CD4-positive, alpha-beta T cell (primary cell): ENCODE measurements at regions of chr6 and their contacts with region 1.

Region 1: DNA sequence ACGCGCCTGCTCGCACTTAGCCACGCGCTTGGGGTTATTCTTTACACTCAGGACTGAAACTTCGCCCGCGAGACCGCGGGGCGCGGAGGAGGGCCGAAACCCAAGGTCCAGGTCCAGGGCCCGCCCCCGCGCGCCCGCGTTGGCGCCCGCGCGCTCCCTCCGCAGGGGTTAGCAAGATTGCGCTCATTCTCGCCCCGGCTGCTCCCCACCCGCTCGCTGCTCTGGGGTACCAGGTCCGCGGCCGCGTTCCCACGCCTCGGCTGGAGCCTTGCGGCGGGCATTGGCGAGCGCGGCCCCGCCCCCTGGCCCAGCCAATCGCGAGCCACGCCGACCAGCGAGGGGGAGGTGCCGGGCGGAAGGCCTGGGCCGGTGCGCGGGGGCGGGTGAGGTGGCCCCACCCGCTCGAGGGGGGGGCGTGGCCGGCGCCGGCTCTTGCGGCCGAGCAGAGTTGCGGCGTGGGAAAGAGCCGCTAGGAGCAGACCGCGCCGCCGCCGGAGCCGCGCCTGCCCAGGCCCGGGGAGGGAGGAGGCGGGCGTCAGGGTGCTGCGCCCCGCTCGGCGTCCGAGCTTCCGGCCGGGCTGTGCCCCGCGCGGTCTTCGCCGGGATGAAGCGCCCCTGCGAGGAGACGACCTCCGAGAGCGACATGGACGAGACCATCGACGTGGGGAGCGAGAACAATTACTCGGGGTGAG is at the start of gene HEY2:
- DNase-seq: peak; percentile 55 to 92 (median 76)
- ATAC-seq: peak; percentile 63
- H3K4me3 ChIP-seq: peak within 1 kb of the TSS; percentile 67
- H3K4me3 Mint-ChIP-seq: peak within 1 kb of the TSS; percentile 93
- H3K27ac ChIP-seq: no peak within 1 kb of the TSS
- H3K27ac Mint-ChIP-seq: peak within 1 kb of the TSS; percentile 43
- H3K4me1 ChIP-seq: peaks cover 38% of the 10 kb centered on the region
- H3K4me1 Mint-ChIP-seq: peaks cover 38% of the 10 kb centered on the region
- H3K27me3 ChIP-seq: peaks cover 44 to 58% of the 10 kb centered on the region in 2 experiments
- H3K27me3 Mint-ChIP-seq: peaks cover 85% of the 10 kb centered on the region
- CTCF ChIP-seq: peak; percentile 16
- total RNA-seq, gene HEY2: 0.08 to 0.30 TPM

Region 2: GRCh38 chr6:125191916-125192609 is 557.3 kb before region 1 on chr6:
- CTCF ChIA-PET with region 1: no interaction called
- POLR2A ChIA-PET with region 1: no interaction called
- intact Hi-C with region 1: loop called in 1 of 2 experiments (anchors 5 kb)
- DNase-seq: peak; percentile 9 to 74 (median 40)
- ATAC-seq: peak; percentile 82
- H3K4me3 ChIP-seq: no peak overlapping the region
- H3K4me3 Mint-ChIP-seq: no peak overlapping the region
- H3K27ac ChIP-seq: no peak overlapping the region
- H3K27ac Mint-ChIP-seq: no peak overlapping the region
- H3K4me1 ChIP-seq: peaks cover 5% of the 10 kb centered on the region
- H3K4me1 Mint-ChIP-seq: no peaks in the 10 kb centered on the region
- H3K27me3 ChIP-seq: no peaks in the 10 kb centered on the region
- H3K27me3 Mint-ChIP-seq: peaks cover 10% of the 10 kb centered on the region
- CTCF ChIP-seq: peak; percentile 75

Region 3: DNA sequence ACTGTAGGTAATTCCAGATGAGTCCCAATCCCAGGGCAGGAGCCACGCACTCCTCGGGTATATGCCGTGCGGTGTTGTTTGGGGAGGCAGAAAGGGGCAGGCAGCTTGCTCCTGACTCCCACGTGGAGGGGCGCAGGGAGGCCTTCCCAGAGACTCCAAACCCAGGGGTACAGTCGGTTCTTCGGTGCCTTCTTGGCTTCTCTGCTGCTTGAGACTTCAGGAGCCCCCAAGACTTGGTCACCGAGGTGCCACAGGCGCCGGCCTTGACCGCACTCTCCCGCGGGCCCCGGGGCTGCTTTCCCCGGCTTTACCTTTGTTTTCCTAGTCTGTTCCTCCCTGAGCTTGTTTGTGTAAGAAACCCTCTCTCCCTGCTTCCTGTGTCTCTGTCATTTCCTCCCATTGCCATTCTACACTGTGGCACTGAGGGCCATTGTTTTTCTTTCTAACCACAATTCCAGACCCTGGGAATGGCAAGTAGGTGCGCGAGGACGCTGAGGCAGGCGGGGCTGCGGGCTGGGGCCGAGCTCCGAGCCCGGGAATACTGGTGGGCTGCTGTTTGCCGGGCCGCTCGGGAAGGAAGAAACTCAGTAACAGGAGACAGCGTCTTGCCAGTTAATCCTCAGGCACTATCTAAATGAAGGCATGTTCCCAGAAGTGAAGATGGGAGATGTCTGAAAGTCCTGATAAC is 215.5 kb before region 1 on chr6:
- CTCF ChIA-PET with region 1: no interaction called
- POLR2A ChIA-PET with region 1: no interaction called
- intact Hi-C with region 1: no loop called
- DNase-seq: no peak
- ATAC-seq: no peak
- H3K4me3 ChIP-seq: no peak overlapping the region
- H3K4me3 Mint-ChIP-seq: no peak overlapping the region
- H3K27ac ChIP-seq: no peak overlapping the region
- H3K27ac Mint-ChIP-seq: no peak overlapping the region
- H3K4me1 ChIP-seq: no peaks in the 10 kb centered on the region
- H3K4me1 Mint-ChIP-seq: no peaks in the 10 kb centered on the region
- H3K27me3 ChIP-seq: peaks cover 4 to 40% of the 10 kb centered on the region in 2 experiments
- H3K27me3 Mint-ChIP-seq: peaks cover 77% of the 10 kb centered on the region
- CTCF ChIP-seq: no peak

Region 4: DNA sequence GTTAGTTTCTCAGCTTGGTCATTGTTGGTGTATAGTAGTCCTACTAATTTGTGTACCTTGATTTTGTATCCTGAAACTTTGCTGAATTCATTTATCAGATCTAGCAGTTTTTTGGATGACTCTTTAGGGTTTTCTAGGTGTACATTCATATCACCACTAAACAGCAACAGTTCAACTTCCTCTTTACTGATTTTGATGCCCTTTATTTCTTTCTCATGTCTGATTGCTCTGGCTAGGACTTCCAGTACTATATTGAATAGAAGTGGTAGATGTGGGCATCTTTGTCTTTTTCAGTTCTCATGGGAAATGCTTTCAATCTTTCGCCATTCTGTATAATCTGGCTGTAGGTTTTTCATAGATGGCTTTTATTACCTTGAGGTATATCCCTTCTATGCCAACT is 61.2 kb before region 1 on chr6:
- CTCF ChIA-PET with region 1: no interaction called
- POLR2A ChIA-PET with region 1: no interaction called
- intact Hi-C with region 1: no loop called
- DNase-seq: no peak
- ATAC-seq: no peak
- H3K4me3 ChIP-seq: no peak overlapping the region
- H3K4me3 Mint-ChIP-seq: no peak overlapping the region
- H3K27ac ChIP-seq: no peak overlapping the region
- H3K27ac Mint-ChIP-seq: no peak overlapping the region
- H3K4me1 ChIP-seq: no peaks in the 10 kb centered on the region
- H3K4me1 Mint-ChIP-seq: no peaks in the 10 kb centered on the region
- H3K27me3 ChIP-seq: peaks cover 3 to 7% of the 10 kb centered on the region in 2 experiments
- H3K27me3 Mint-ChIP-seq: peaks cover 55% of the 10 kb centered on the region
- CTCF ChIP-seq: no peak

Region 5: GRCh38 chr6:125773387-125774341 is 24.3 kb after region 1 on chr6:
- CTCF ChIA-PET with region 1: interaction called, 3 read pairs
- POLR2A ChIA-PET with region 1: no interaction called
- intact Hi-C with region 1: loop called (anchors 2 to 5 kb)
- DNase-seq: no peak
- ATAC-seq: no peak
- H3K4me3 ChIP-seq: no peak overlapping the region
- H3K4me3 Mint-ChIP-seq: no peak overlapping the region
- H3K27ac ChIP-seq: no peak overlapping the region
- H3K27ac Mint-ChIP-seq: no peak overlapping the region
- H3K4me1 ChIP-seq: no peaks in the 10 kb centered on the region
- H3K4me1 Mint-ChIP-seq: peaks cover 7% of the 10 kb centered on the region
- H3K27me3 ChIP-seq: no peaks in the 10 kb centered on the region
- H3K27me3 Mint-ChIP-seq: peaks cover 4% of the 10 kb centered on the region
- CTCF ChIP-seq: no peak

Region 6: GRCh38 chr6:125884634-125885371 is 135.5 kb after region 1 on chr6:
- CTCF ChIA-PET with region 1: no interaction called
- POLR2A ChIA-PET with region 1: no interaction called
- intact Hi-C with region 1: no loop called
- DNase-seq: no peak
- ATAC-seq: no peak
- H3K4me3 ChIP-seq: no peak overlapping the region
- H3K4me3 Mint-ChIP-seq: no peak overlapping the region
- H3K27ac ChIP-seq: no peak overlapping the region
- H3K27ac Mint-ChIP-seq: no peak overlapping the region
- H3K4me1 ChIP-seq: no peaks in the 10 kb centered on the region
- H3K4me1 Mint-ChIP-seq: no peaks in the 10 kb centered on the region
- H3K27me3 ChIP-seq: no peaks in the 10 kb centered on the region
- H3K27me3 Mint-ChIP-seq: no peaks in the 10 kb centered on the region
- CTCF ChIP-seq: no peak